MCF 10A (cell line): ENCODE measurements at regions of chr10 and their contacts with region 1.

Region 1: DNA sequence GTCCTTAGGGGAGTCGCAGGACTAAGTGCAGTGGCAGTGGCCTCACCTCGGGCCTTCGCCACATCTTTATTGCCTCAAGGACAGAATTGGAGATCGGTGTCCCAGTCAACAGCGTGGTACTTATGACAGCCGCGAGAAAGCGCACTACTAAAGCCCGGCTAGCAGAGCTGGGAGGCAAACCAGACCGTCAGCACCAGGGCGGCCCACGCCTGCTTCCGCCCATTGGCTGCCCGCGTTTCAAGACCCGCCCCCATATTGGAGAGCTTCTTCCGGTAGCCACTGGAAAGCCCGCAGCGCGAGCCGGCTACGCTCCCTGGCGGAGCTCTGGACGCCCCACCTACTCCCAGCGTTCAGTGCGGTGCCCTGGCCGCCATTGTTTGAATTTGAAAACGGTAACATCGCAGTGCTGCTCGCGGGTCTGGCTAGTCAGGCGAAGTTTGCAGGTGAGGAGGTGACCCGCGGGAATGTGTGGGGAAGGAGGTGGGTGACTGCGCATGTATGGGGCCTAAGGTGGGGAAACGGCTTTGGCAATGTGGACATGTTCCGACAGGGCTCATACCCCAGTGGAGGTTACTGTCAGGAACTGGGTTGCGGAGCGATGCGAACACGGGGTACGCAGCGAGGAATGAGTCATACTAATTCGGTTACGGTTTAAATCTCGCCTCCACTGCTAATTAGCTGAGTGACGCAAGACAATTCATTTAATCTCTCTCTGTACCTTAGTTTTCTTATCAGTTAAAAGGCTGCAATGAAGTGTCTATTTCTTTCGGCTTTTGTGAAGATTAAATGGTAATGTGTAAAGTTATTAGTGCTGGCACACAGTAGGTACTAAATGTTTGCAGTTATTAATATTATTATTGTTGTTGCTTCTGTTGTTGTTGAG is at the start of gene KIF20B:
- DNase-seq: peak; percentile 97
- H3K4me3 Mint-ChIP-seq: peak within 1 kb of the TSS; percentile 98
- H3K27ac Mint-ChIP-seq: peak within 1 kb of the TSS; percentile 89
- H3K4me1 Mint-ChIP-seq: peaks cover 36% of the 10 kb centered on the region
- H3K27me3 Mint-ChIP-seq: no peaks in the 10 kb centered on the region
- CTCF ChIP-seq: no peak
- total RNA-seq, gene KIF20B: 30.3 and 33.7 TPM in 2 replicates

Region 2: GRCh38 chr10:89269433-89270152 is 431.9 kb before region 1 on chr10:
- CTCF ChIA-PET with region 1: no interaction called
- POLR2A ChIA-PET with region 1: no interaction called
- intact Hi-C with region 1: no loop called
- DNase-seq: no peak
- H3K4me3 Mint-ChIP-seq: no peak overlapping the region
- H3K27ac Mint-ChIP-seq: no peak overlapping the region
- H3K4me1 Mint-ChIP-seq: no peaks in the 10 kb centered on the region
- H3K27me3 Mint-ChIP-seq: no peaks in the 10 kb centered on the region
- CTCF ChIP-seq: no peak

Region 3: GRCh38 chr10:89426230-89426868 is 275.1 kb before region 1 on chr10:
- CTCF ChIA-PET with region 1: no interaction called
- POLR2A ChIA-PET with region 1: no interaction called
- intact Hi-C with region 1: loop called (anchors 5 kb)
- DNase-seq: peak; percentile 70
- H3K4me3 Mint-ChIP-seq: no peak overlapping the region
- H3K27ac Mint-ChIP-seq: no peak overlapping the region
- H3K4me1 Mint-ChIP-seq: peaks cover 26% of the 10 kb centered on the region
- H3K27me3 Mint-ChIP-seq: no peaks in the 10 kb centered on the region
- CTCF ChIP-seq: peak; percentile 74

Region 4: DNA sequence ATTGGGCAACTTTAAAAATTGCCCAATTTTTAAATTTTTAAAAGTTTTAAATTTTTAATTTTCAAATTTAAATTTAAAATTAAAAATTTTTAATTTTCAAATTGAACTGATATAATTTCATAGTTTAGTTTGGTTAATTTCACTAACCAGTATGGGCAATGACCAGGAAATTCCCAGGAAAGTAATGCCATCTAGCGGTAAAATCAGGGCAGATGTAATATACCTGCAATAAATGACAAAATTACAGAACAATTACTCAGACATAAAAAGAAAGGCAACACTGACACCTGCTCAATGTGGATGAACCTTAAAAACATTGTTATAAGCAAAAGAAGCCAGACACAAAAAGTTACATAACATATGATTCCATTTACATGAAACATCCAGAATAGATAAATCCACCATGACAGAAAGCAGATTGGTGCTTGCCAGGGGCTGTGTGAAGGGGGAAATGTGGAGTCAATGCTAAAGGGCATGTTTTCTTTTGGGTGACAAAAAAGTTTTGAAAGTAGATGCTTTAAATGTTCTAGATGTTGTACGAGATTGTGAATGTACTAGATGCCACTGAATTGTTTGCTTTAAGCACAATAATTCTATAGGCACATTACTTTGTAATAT is 137.5 kb before region 1 on chr10:
- CTCF ChIA-PET with region 1: interaction called, 3 read pairs
- POLR2A ChIA-PET with region 1: interaction called, 4 read pairs
- intact Hi-C with region 1: loop called (anchors 1 kb)
- DNase-seq: peak; percentile 62
- H3K4me3 Mint-ChIP-seq: no peak overlapping the region
- H3K27ac Mint-ChIP-seq: peak overlapping the region; percentile 17
- H3K4me1 Mint-ChIP-seq: peaks cover 6% of the 10 kb centered on the region
- H3K27me3 Mint-ChIP-seq: no peaks in the 10 kb centered on the region
- CTCF ChIP-seq: peak; percentile 71

Region 5: GRCh38 chr10:89625041-89625765 is 76.3 kb before region 1 on chr10:
- CTCF ChIA-PET with region 1: interaction called, 4 read pairs
- POLR2A ChIA-PET with region 1: interaction called, 10 read pairs
- intact Hi-C with region 1: no loop called
- DNase-seq: no peak
- H3K4me3 Mint-ChIP-seq: no peak overlapping the region
- H3K27ac Mint-ChIP-seq: no peak overlapping the region
- H3K4me1 Mint-ChIP-seq: peaks cover 5% of the 10 kb centered on the region
- H3K27me3 Mint-ChIP-seq: no peaks in the 10 kb centered on the region
- CTCF ChIP-seq: no peak

Region 6: GRCh38 chr10:89633484-89633883 is 68.0 kb before region 1 on chr10:
- CTCF ChIA-PET with region 1: no interaction called
- POLR2A ChIA-PET with region 1: interaction called, 10 read pairs
- intact Hi-C with region 1: no loop called
- DNase-seq: peak; percentile 79
- H3K4me3 Mint-ChIP-seq: no peak overlapping the region
- H3K27ac Mint-ChIP-seq: peak overlapping the region; percentile 54
- H3K4me1 Mint-ChIP-seq: peaks cover 20% of the 10 kb centered on the region
- H3K27me3 Mint-ChIP-seq: no peaks in the 10 kb centered on the region
- CTCF ChIP-seq: no peak

Region 7: GRCh38 chr10:89643431-89644331 is 57.8 kb before region 1 on chr10:
- CTCF ChIA-PET with region 1: interaction called, 7 read pairs
- POLR2A ChIA-PET with region 1: interaction called, 76 read pairs
- intact Hi-C with region 1: loop called (anchors 1 kb)
- DNase-seq: peak; percentile 99
- H3K4me3 Mint-ChIP-seq: no peak overlapping the region
- H3K27ac Mint-ChIP-seq: no peak overlapping the region
- H3K4me1 Mint-ChIP-seq: peaks cover 31% of the 10 kb centered on the region
- H3K27me3 Mint-ChIP-seq: no peaks in the 10 kb centered on the region
- CTCF ChIP-seq: no peak

Region 8: GRCh38 chr10:89773081-89773480 is 71.6 kb after region 1 on chr10:
- CTCF ChIA-PET with region 1: no interaction called
- POLR2A ChIA-PET with region 1: no interaction called
- intact Hi-C with region 1: no loop called
- DNase-seq: no peak
- H3K4me3 Mint-ChIP-seq: no peak overlapping the region
- H3K27ac Mint-ChIP-seq: peak overlapping the region; percentile 29
- H3K4me1 Mint-ChIP-seq: peaks cover 17% of the 10 kb centered on the region
- H3K27me3 Mint-ChIP-seq: no peaks in the 10 kb centered on the region
- CTCF ChIP-seq: no peak